ENCODE measurements at regions of chr2 and their contacts with region 1.

Region 1: DNA sequence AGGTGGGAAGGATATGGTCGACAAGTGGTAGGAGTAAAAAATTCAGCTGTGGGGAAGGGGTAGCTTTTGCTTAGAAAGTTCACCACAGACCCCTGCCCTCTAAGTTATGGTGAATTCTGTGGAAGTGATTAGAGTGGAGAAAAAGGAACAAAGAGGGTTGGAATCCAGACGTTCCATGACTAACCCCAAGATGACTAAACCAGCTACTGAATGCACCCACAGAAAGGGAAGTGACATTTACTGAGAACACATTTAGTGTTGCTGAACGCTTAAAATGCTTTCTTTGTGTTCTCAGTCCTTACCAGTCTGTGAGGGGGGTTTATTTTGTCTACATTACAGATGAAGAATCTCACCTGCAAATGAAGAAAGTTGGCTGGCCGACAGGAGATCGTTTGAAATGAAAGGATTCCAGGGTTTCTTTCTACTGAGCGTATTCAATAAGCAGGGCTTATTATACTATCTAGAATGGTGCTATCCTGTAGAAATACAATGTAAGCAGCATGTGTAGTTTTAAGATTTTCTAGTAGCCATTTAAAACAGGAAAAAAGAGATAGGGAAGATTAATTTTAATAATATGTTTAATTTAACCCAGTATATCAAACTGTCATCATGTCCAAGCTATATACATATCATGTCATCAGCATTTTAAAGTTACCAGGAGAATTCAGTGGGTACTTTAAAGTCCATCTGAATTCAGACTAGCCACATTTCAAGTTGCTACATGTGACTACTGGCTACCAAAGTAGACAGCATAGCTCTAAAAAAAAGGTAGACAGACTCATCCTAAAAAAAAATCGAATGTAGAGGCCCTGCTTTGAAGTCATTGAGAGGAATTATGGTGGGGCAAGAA is 60.1 kb downstream of the LIMS1 start:
- DNase-seq: peak; percentile 81 to 96 (median 93)
- H3K4me3 ChIP-seq: peak overlapping the region in 6 of 7 experiments; percentile 14 to 62 (median 44)
- H3K27ac ChIP-seq: peak overlapping the region; percentile 76 to 90
- H3K4me1 ChIP-seq: peaks cover 41 to 76% (median 64%) of the 10 kb centered on the region in 4 experiments
- H3K27me3 ChIP-seq: no peaks in the 10 kb centered on the region

Region 2: DNA sequence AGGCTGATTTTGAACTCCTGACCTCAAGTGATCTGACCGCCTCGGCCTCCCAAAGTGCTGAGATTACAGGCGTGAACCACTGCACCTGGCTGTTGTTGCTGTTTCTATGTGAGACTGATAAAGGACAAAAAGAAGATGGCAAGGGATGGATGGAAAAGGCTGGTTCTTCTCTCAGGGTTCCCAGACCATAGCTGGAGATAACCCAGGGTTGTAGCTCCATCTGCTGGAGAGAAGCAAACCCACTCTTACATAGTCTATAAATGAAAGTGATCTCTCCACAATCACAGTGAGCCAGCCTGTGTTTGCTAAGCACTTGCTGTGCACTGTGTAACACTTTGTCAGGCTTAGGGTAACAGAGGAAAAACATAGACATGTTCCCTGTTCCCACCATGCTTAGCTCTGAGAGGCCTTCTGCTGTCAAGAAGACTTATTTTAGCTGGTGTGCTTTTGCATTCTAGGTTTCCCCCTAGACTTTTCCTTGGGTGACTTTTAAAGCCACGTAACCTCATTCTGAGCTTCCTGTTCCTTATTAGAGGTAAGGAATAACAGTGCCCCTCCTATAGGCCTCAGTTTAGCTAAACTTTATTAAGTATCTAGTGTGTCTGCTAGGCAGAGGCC is 10.3 kb before region 1 on chr2:
- CTCF ChIA-PET with region 1: interaction called, 13 read pairs
- POLR2A ChIA-PET with region 1: no interaction called
- DNase-seq: peak; percentile 77 to 88 (median 85)
- H3K4me3 ChIP-seq: peak overlapping the region in 4 of 7 experiments; percentile 6 to 71 (median 28)
- H3K27ac ChIP-seq: no peak overlapping the region
- H3K4me1 ChIP-seq: peaks cover 24 to 57% (median 39%) of the 10 kb centered on the region in 4 experiments
- H3K27me3 ChIP-seq: no peaks in the 10 kb centered on the region

Region 3: GRCh38 chr2:108607706-108608301 is 13.4 kb after region 1 on chr2:
- CTCF ChIA-PET with region 1: interaction called, 33 read pairs
- POLR2A ChIA-PET with region 1: no interaction called
- DNase-seq: peak; percentile 64 to 84 (median 81)
- H3K4me3 ChIP-seq: no peak overlapping the region
- H3K27ac ChIP-seq: no peak overlapping the region
- H3K4me1 ChIP-seq: peaks cover 5 to 75% (median 48%) of the 10 kb centered on the region in 4 experiments
- H3K27me3 ChIP-seq: no peaks in the 10 kb centered on the region

Measured in common myeloid progenitor, CD34-positive (primary cell).